Activated T-helper 1 cell treated with anti-CD3 and anti-CD28 coated beads, Interleukin-12 subunit alpha, Interleukin-12 subunit beta, Interleukin-2, Interleukin-4 antibody, amounts not matched to agents 30 ng/mL and 10 ng/mL and 1 ng/mL, durations not matched to agents 14 hours and 24 hours and 36 hours (primary cell): ENCODE measurements at regions of chr13 and their contacts with region 1.

Region 1: GRCh38 chr13:99995589-99996380 is 14.2 kb downstream of the ZIC2 start:
- DNase-seq: no peak
- H3K4me3 Mint-ChIP-seq: peak overlapping the region; percentile 45
- H3K27ac Mint-ChIP-seq: peak overlapping the region; percentile 44
- H3K4me1 Mint-ChIP-seq: peaks cover 30% of the 10 kb centered on the region
- H3K27me3 Mint-ChIP-seq: peaks cover 74% of the 10 kb centered on the region

Region 2: GRCh38 chr13:99766641-99767045 is 229.1 kb before region 1 on chr13:
- intact Hi-C with region 1: no loop called
- DNase-seq: no peak
- H3K4me3 Mint-ChIP-seq: no peak overlapping the region
- H3K27ac Mint-ChIP-seq: no peak overlapping the region
- H3K4me1 Mint-ChIP-seq: no peaks in the 10 kb centered on the region
- H3K27me3 Mint-ChIP-seq: peaks cover 8% of the 10 kb centered on the region

Region 3: GRCh38 chr13:99895223-99895994 is 100.4 kb before region 1 on chr13:
- intact Hi-C with region 1: loop called (anchors 2 kb)
- DNase-seq: no peak
- H3K4me3 Mint-ChIP-seq: peak overlapping the region; percentile 79
- H3K27ac Mint-ChIP-seq: peak overlapping the region; percentile 41
- H3K4me1 Mint-ChIP-seq: peaks cover 15% of the 10 kb centered on the region
- H3K27me3 Mint-ChIP-seq: peaks cover 61% of the 10 kb centered on the region

Region 4: GRCh38 chr13:99979453-99980200 is 16.2 kb before region 1 on chr13:
- intact Hi-C with region 1: loop called (anchors 2 kb)
- DNase-seq: no peak
- H3K4me3 Mint-ChIP-seq: no peak overlapping the region
- H3K27ac Mint-ChIP-seq: no peak overlapping the region
- H3K4me1 Mint-ChIP-seq: peaks cover 16% of the 10 kb centered on the region
- H3K27me3 Mint-ChIP-seq: peaks cover 67% of the 10 kb centered on the region

Region 5: GRCh38 chr13:100088644-100089464 is 93.1 kb after region 1 on chr13 and contains the start of gene PCCA:
- intact Hi-C with region 1: loop called (anchors 2 kb)
- DNase-seq: peak; percentile 80
- H3K4me3 Mint-ChIP-seq: peak within 1 kb of the TSS; percentile 92
- H3K27ac Mint-ChIP-seq: peak within 1 kb of the TSS; percentile 87
- H3K4me1 Mint-ChIP-seq: peaks cover 24% of the 10 kb centered on the region
- H3K27me3 Mint-ChIP-seq: peaks cover 8% of the 10 kb centered on the region
- total RNA-seq, gene PCCA: 8.6 and 9.7 TPM in 2 replicates

Region 6: DNA sequence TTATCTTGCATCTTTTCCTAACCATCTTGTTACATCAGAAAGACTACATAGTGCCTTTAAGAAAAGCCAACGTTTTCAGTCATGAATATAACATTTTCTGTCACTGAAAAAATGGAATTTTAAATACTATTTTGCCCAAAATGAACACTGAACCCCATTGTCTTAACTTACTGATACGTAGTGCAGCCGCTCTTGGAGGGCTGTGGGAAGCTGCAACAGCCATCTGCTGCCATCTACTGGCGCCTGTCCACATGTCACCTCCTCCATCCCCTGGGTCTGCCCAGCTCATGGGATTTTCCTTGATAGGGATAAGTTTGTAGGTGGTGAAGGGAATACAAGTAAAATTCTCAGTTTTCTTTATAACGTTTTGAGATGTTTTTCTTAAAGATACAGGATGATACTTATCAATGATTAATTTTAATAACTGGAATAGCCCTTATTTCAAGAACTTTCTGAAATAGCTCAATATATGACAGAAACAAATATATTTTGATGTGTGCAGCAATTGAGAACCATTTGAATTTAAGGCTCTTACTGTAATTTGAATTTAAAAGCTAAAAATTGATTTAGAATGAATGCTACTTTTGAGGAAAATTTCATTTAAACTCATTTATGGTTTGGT is 519.1 kb after region 1 on chr13:
- intact Hi-C with region 1: loop called (anchors 2 kb)
- DNase-seq: peak; percentile 52
- H3K4me3 Mint-ChIP-seq: no peak overlapping the region
- H3K27ac Mint-ChIP-seq: no peak overlapping the region
- H3K4me1 Mint-ChIP-seq: peaks cover 54% of the 10 kb centered on the region
- H3K27me3 Mint-ChIP-seq: peaks cover 7% of the 10 kb centered on the region

Region 7: DNA sequence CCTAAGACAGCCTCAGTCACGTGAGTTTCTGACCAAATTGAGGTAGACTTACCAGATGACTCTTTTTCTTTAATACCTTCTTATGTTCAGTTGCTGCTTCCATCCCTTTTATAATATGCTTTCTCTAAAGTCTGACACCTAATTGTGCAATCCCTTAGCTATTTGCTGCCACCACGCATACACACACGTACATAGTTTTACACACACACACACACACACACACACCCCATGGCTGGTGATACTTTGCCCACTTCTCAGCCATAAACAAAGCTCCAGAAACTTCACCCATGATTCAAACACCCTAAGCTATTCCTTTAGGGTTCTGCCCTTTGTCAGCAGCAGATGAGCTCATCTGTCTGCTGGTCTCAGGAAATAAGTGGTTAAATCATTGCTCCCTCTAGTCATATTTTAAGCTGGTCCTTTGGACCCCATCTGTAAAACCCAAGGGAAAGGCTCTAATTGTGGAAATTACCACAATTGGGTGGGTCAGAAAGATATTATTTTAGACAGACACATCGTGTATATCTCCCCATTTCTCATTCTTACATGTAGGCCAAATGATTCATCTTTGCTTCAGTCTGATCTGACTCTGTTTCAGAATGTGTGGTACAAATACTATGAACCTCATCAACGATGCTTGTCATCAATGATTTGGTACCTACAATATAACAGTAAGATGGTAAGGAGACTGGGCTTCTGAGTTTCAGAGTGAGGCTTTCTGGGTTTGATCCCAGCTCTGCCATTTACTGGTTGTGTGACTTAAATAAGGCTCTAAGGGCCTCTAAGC is 1351.3 kb after region 1 on chr13:
- intact Hi-C with region 1: no loop called
- DNase-seq: no peak
- H3K4me3 Mint-ChIP-seq: no peak overlapping the region
- H3K27ac Mint-ChIP-seq: no peak overlapping the region
- H3K4me1 Mint-ChIP-seq: no peaks in the 10 kb centered on the region
- H3K27me3 Mint-ChIP-seq: no peaks in the 10 kb centered on the region